ENCODE measurements at regions of chr1 and their contacts with region 1.

Region 1: DNA sequence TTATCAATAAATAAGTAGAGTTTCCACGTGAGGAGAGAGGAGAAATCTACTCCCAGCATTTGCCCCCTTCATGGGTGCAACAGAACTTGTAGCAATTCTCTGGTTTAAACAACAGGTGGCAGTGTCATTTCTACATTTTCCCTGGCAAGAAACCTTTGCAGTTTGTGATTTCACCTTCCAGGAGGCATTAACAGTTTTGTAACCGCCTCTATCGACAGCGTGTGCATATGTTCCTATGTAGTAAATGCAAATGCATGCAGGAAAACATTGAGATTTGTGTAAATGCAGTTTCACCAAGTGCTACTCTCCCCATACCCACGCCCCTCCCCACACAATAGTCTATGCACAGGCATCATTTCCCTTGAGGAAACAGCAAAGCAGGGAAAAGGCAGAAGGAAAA is 494.7 kb downstream of the SMYD3 start:
- DNase-seq: no peak
- H3K4me3 ChIP-seq: no peak overlapping the region
- H3K27ac ChIP-seq: no peak overlapping the region
- H3K4me1 ChIP-seq: no peaks in the 10 kb centered on the region
- H3K27me3 ChIP-seq: no peaks in the 10 kb centered on the region
- CTCF ChIP-seq: peak; percentile 45 to 74 (median 72)
- POLR2A ChIP-seq: no peak

Region 2: DNA sequence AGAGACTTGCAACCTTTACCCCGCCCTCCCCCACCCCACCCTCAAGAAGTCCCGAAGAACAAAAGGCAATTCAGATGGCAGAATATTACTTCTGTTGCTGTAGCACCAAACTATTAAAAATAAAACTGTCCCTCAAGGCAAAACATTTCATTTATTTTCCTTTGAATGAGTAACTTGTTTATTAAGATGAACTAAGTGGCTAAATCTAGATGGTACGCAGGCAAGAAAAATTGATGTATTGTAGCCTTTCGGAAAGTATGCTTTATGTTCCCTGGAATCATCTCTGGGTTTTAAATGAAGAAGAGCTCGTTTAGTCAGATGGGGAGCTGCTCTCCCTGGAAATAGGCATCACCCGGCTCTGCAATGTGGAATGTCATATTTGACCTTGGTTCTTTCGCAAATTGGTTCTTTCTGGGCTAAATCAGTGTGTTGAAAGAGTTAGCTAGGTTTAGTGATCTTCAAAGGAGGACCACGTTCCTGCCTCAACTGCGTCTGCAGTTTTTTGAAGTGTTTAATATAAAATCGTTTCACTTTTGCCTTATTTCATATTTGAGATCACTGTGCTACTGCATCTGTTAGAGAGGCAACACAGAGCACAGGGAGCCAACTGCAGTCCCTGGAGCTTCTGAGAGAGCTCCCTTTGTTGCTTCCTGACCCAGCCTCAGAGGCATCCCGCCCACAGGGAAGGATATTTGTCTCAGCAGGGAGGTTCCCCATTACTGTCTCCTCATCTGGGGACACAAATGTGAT is 795.8 kb before region 1 on chr1:
- intact Hi-C with region 1: no loop called
- DNase-seq: no peak
- H3K4me3 ChIP-seq: no peak overlapping the region
- H3K27ac ChIP-seq: no peak overlapping the region
- H3K4me1 ChIP-seq: no peaks in the 10 kb centered on the region
- H3K27me3 ChIP-seq: no peaks in the 10 kb centered on the region
- CTCF ChIP-seq: no peak
- POLR2A ChIP-seq: no peak

Region 3: GRCh38 chr1:246117066-246117791 is 104.9 kb after region 1 on chr1:
- intact Hi-C with region 1: loop called (anchors 5 to 10 kb)
- DNase-seq: peak; percentile 24 to 65 (median 42)
- H3K4me3 ChIP-seq: no peak overlapping the region
- H3K27ac ChIP-seq: no peak overlapping the region
- H3K4me1 ChIP-seq: no peaks in the 10 kb centered on the region
- H3K27me3 ChIP-seq: no peaks in the 10 kb centered on the region
- CTCF ChIP-seq: peak; percentile 35 to 60 (median 44)
- POLR2A ChIP-seq: no peak

Region 4: GRCh38 chr1:246280551-246280950 is 268.2 kb after region 1 on chr1:
- intact Hi-C with region 1: loop called in 1 of 2 experiments (anchors 5 kb)
- DNase-seq: peak in 1 of 7 donors; percentile 28
- H3K4me3 ChIP-seq: no peak overlapping the region
- H3K27ac ChIP-seq: no peak overlapping the region
- H3K4me1 ChIP-seq: no peaks in the 10 kb centered on the region
- H3K27me3 ChIP-seq: no peaks in the 10 kb centered on the region
- CTCF ChIP-seq: peak in 5 of 6 experiments; percentile 26 to 49 (median 45)
- POLR2A ChIP-seq: no peak

Region 5: DNA sequence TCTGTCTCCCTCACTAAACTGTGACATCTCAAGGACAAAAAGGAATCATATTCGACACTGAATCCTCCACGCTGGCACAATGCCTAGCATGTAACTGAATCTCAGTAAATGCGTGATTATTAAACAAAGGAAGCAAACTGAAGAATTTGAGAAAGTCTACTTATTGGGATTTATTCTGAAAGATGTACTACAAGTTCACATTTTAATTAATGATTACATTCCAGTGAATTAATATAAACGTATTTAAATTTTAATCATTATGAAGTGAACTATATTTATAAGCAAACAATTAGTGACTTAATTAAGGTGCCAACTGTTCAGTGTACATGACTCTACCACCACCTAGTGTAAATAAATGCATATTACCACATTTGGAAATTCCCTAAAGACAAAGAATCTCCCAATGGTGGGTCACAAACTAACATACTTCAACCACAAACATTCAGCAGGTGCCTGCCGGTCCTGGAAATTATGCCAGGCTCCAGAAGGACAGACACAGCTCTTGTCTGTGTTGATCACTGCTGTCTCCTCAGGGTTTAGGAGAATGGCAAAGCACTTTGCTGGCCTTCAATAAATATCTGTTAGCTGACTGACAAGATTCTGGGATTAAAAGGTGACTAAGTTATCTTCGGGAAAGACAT is 438.4 kb after region 1 on chr1:
- intact Hi-C with region 1: loop called in 1 of 2 experiments (anchors 5 kb)
- DNase-seq: peak in 2 of 7 donors; percentile 20 to 33
- H3K4me3 ChIP-seq: no peak overlapping the region
- H3K27ac ChIP-seq: no peak overlapping the region
- H3K4me1 ChIP-seq: no peaks in the 10 kb centered on the region
- H3K27me3 ChIP-seq: no peaks in the 10 kb centered on the region
- CTCF ChIP-seq: peak; percentile 61 to 89 (median 82)
- POLR2A ChIP-seq: no peak

Measured in adrenal gland (tissue), 19 donors.